B cell (primary cell): ENCODE measurements at regions of chr19 and their contacts with region 1.

Region 1: GRCh38 chr19:20167020-20167644 is at the start of gene ZNF486:
- DNase-seq: peak; percentile 95
- ATAC-seq: peak; percentile 98
- H3K4me3 ChIP-seq: peak within 1 kb of the TSS; percentile 54 to 99 (median 73)
- H3K4me3 Mint-ChIP-seq: peak within 1 kb of the TSS; percentile 100
- H3K27ac ChIP-seq: peak within 1 kb of the TSS; percentile 65 to 78
- H3K27ac Mint-ChIP-seq: peak within 1 kb of the TSS; percentile 97
- H3K4me1 ChIP-seq: peaks cover 17 to 25% of the 10 kb centered on the region in 2 donors
- H3K4me1 Mint-ChIP-seq: peaks cover 56% of the 10 kb centered on the region
- H3K27me3 ChIP-seq: no peaks in the 10 kb centered on the region
- H3K27me3 Mint-ChIP-seq: no peaks in the 10 kb centered on the region
- CTCF ChIP-seq: no peak
- total RNA-seq, gene ZNF486: 16.6 and 18.3 TPM in 2 replicates

Region 2: DNA sequence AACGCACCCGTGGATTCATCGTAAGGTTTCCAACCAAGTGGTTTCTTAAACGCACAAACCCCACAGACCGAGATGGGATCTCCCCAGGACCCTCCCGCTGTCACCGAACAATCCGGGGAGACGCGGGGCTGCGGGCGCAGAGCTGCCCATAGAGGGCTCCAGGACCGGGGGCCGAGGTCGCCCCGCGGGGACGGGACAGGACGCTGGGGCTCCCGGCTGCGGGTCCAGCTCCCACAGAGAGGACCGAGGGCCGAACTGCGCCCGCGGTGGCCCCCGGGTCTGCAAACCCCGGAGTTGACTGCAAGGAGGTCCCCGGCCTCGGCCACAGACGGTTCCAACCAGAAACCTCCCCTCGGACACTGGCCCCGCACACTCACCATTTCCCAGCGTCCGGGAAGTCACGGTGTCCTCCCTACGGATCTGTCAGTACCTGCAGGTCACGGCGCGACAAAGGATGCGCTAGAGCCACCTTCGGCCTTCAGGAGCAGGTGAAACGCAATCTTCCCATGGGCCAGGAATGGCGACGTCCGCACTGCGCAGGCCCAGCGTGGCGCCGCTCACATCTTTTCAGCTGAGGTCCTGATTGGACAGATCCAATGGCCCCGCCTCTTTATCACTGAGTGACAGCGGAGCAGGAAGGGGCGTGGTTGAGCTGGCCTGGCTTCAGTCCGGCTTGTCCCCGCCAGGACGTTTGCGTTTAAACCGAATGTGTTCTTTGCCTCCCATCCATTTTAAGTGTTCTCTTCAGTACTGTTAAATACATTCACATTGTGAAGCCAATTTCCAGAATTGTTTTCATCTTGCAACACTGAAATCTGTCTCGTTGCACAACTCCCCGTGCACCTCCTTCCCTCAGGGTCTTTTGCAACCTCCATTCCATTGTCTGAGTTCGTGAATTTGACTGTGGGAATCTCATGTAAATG is 434.3 kb before region 1 on chr19 and contains the start of gene ZNF14:
- CTCF ChIA-PET with region 1: no interaction called
- POLR2A ChIA-PET with region 1: no interaction called
- intact Hi-C with region 1: loop called (anchors 1 kb)
- DNase-seq: peak; percentile 94
- ATAC-seq: peak; percentile 100
- H3K4me3 ChIP-seq: peak within 1 kb of the TSS; percentile 59 to 95 (median 94)
- H3K4me3 Mint-ChIP-seq: peak within 1 kb of the TSS; percentile 99
- H3K27ac ChIP-seq: peak within 1 kb of the TSS; percentile 49 to 76
- H3K27ac Mint-ChIP-seq: peak within 1 kb of the TSS; percentile 96
- H3K4me1 ChIP-seq: peaks cover 11 to 17% of the 10 kb centered on the region in 2 donors
- H3K4me1 Mint-ChIP-seq: peaks cover 27% of the 10 kb centered on the region
- H3K27me3 ChIP-seq: no peaks in the 10 kb centered on the region
- H3K27me3 Mint-ChIP-seq: no peaks in the 10 kb centered on the region
- CTCF ChIP-seq: no peak
- total RNA-seq, gene ZNF14: 21.0 and 22.5 TPM in 2 replicates

Region 3: GRCh38 chr19:20005766-20006165 is 161.4 kb before region 1 on chr19:
- CTCF ChIA-PET with region 1: no interaction called
- POLR2A ChIA-PET with region 1: no interaction called
- intact Hi-C with region 1: no loop called
- DNase-seq: no peak
- ATAC-seq: no peak
- H3K4me3 ChIP-seq: peak overlapping the region in 1 of 5 experiments; percentile 14
- H3K4me3 Mint-ChIP-seq: no peak overlapping the region
- H3K27ac ChIP-seq: no peak overlapping the region
- H3K27ac Mint-ChIP-seq: no peak overlapping the region
- H3K4me1 ChIP-seq: no peaks in the 10 kb centered on the region
- H3K4me1 Mint-ChIP-seq: no peaks in the 10 kb centered on the region
- H3K27me3 ChIP-seq: no peaks in the 10 kb centered on the region
- H3K27me3 Mint-ChIP-seq: no peaks in the 10 kb centered on the region
- CTCF ChIP-seq: no peak

Region 4: GRCh38 chr19:20044663-20045062 is 122.5 kb before region 1 on chr19:
- CTCF ChIA-PET with region 1: no interaction called
- POLR2A ChIA-PET with region 1: interaction called, 7 read pairs
- intact Hi-C with region 1: loop called (anchors 10 kb)
- DNase-seq: no peak
- ATAC-seq: no peak
- H3K4me3 ChIP-seq: no peak overlapping the region
- H3K4me3 Mint-ChIP-seq: no peak overlapping the region
- H3K27ac ChIP-seq: no peak overlapping the region
- H3K27ac Mint-ChIP-seq: no peak overlapping the region
- H3K4me1 ChIP-seq: peaks cover 0 to 2% of the 10 kb centered on the region in 2 donors
- H3K4me1 Mint-ChIP-seq: no peaks in the 10 kb centered on the region
- H3K27me3 ChIP-seq: peaks cover 0 to 5% (median 0%) of the 10 kb centered on the region in 4 experiments
- H3K27me3 Mint-ChIP-seq: no peaks in the 10 kb centered on the region
- CTCF ChIP-seq: no peak

Region 5: GRCh38 chr19:20237761-20238623 is 70.9 kb after region 1 on chr19:
- CTCF ChIA-PET with region 1: interaction called, 3 read pairs
- POLR2A ChIA-PET with region 1: interaction called, 3 read pairs
- intact Hi-C with region 1: loop called (anchors 2 kb)
- DNase-seq: peak; percentile 91
- ATAC-seq: peak; percentile 85
- H3K4me3 ChIP-seq: peak overlapping the region; percentile 58 to 89 (median 82)
- H3K4me3 Mint-ChIP-seq: peak overlapping the region; percentile 100
- H3K27ac ChIP-seq: peak overlapping the region; percentile 22 to 73
- H3K27ac Mint-ChIP-seq: peak overlapping the region; percentile 87
- H3K4me1 ChIP-seq: peaks cover 3 to 22% of the 10 kb centered on the region in 2 donors
- H3K4me1 Mint-ChIP-seq: peaks cover 29% of the 10 kb centered on the region
- H3K27me3 ChIP-seq: no peaks in the 10 kb centered on the region
- H3K27me3 Mint-ChIP-seq: no peaks in the 10 kb centered on the region
- CTCF ChIP-seq: no peak

Region 6: DNA sequence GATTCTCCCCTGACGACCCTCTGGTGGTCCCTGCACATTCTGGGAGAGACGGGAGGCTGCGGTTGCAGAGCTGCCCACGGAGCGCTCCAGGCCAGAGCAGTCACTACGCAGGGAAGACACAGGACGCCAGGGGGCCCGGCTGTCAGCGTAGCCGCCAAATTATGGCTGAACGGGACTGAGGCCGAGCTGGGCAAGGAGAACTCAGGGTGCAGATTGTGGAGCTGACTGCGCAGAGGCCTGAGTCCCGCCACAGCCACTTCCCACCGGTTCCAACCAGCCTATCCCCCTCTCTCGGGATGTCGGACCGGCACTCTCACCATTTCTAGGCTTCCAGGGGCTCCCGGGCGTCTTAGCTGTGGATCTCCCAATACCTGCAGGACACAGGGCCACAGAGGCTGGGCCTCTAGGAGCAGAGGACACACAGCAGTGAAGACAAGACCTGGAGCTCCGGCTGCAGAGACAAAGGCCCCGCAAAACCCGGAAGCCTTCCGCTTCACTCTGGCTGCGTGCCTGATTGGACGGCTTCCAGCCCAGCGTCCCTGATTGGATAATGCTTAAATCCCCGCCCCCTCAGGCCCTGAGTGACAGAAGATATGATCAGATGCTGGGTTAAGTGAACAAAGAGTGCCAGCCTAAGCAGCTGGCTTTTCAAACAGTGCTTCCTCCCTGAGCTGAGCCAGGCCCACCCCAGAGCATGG is 398.3 kb after region 1 on chr19 and contains the start of gene ZNF737:
- CTCF ChIA-PET with region 1: no interaction called
- POLR2A ChIA-PET with region 1: interaction called, 6 read pairs
- intact Hi-C with region 1: loop called (anchors 5 kb)
- DNase-seq: peak; percentile 93
- ATAC-seq: peak; percentile 92
- H3K4me3 ChIP-seq: peak within 1 kb of the TSS; percentile 38 to 87 (median 80)
- H3K4me3 Mint-ChIP-seq: peak within 1 kb of the TSS; percentile 98
- H3K27ac ChIP-seq: peak within 1 kb of the TSS; percentile 93 to 96
- H3K27ac Mint-ChIP-seq: peak within 1 kb of the TSS; percentile 99
- H3K4me1 ChIP-seq: peaks cover 6 to 15% of the 10 kb centered on the region in 2 donors
- H3K4me1 Mint-ChIP-seq: peaks cover 32% of the 10 kb centered on the region
- H3K27me3 ChIP-seq: no peaks in the 10 kb centered on the region
- H3K27me3 Mint-ChIP-seq: no peaks in the 10 kb centered on the region
- CTCF ChIP-seq: no peak
- total RNA-seq, gene ZNF737: 45.6 and 50.1 TPM in 2 replicates